MCF 10A (cell line): ENCODE measurements at regions of chr1 and their contacts with region 1.

Region 1: DNA sequence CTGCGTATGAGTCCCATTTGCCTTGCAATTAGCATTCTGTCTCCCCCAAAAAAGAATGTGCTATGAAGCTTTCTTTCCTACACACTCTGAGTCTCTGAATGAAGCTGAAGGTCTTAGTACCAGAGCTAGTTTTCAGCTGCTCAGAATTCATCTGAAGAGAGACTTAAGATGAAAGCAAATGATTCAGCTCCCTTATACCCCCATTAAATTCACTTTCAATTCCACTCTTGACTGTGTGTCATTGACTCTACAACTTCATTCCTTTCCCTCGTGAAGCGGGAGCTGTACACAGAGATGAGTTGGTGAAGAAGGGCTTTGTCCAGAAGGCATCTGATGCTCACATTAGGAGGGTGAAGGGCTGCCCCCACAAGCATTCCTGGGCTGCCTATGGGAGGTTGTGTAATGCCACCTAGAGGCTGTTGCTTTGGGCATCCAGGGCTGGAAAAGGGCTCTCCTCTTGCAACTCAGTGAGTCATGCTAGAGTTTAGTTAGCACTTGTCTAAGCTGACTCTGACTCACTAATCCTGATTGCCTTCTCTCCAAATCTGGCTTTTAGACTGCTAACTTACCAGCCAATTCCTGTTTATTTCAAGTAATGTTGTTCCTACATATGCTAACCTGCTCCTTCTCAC is 1.8 kb downstream of the SPRR1B start:
- DNase-seq: peak; percentile 97
- H3K4me3 Mint-ChIP-seq: no peak overlapping the region
- H3K27ac Mint-ChIP-seq: peak overlapping the region; percentile 25
- H3K4me1 Mint-ChIP-seq: peaks cover 12% of the 10 kb centered on the region
- H3K27me3 Mint-ChIP-seq: no peaks in the 10 kb centered on the region
- CTCF ChIP-seq: peak; percentile 68

Region 2: DNA sequence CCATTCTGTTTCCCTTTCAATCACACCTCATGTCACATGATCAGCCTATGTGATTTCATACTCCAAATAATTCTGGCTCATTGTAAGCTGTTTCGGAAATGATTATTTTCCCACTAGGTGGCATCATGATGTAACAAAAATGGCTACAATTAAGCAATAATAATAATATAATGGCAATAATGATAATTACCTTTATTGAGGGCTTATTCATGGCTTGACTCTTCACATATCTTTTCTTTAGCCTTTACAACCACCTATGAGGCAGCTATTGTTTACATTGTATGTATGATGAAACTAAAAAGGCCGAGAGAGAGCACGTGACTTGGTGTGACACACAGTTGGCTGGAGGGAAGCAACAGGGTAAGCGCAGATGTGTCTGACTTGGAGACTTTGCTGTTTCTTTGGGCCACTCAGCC is 287.5 kb before region 1 on chr1:
- CTCF ChIA-PET with region 1: no interaction called
- POLR2A ChIA-PET with region 1: no interaction called
- intact Hi-C with region 1: loop called (anchors 10 kb)
- DNase-seq: peak; percentile 89
- H3K4me3 Mint-ChIP-seq: no peak overlapping the region
- H3K27ac Mint-ChIP-seq: peak overlapping the region; percentile 71
- H3K4me1 Mint-ChIP-seq: peaks cover 34% of the 10 kb centered on the region
- H3K27me3 Mint-ChIP-seq: no peaks in the 10 kb centered on the region
- CTCF ChIP-seq: no peak

Region 3: GRCh38 chr1:152917794-152918193 is 115.0 kb before region 1 on chr1:
- CTCF ChIA-PET with region 1: interaction called, 12 read pairs
- POLR2A ChIA-PET with region 1: no interaction called
- intact Hi-C with region 1: no loop called
- DNase-seq: peak; percentile 37
- H3K4me3 Mint-ChIP-seq: no peak overlapping the region
- H3K27ac Mint-ChIP-seq: no peak overlapping the region
- H3K4me1 Mint-ChIP-seq: peaks cover 8% of the 10 kb centered on the region
- H3K27me3 Mint-ChIP-seq: no peaks in the 10 kb centered on the region
- CTCF ChIP-seq: peak; percentile 40

Region 4: DNA sequence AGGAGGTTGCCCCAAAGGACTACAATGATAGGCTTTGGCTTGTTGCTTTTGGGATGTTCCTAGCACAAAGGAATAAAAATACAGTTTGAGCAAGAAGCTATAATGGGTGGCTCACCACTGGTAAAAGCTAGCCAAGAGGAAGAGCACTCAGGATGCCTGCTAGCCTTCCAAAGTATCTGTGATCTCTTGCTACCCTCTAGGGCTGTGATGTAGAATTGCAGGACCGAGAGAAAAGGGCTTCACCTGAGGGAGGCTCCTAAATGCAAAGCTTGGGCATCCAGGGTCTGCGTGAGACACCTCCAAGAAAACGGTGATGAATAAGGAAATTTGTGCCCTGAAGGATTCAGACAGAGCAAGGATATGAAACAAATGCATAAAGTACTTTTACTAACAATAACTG is 106.7 kb before region 1 on chr1:
- CTCF ChIA-PET with region 1: interaction called, 16 read pairs
- POLR2A ChIA-PET with region 1: interaction called, 8 read pairs
- intact Hi-C with region 1: loop called (anchors 1 kb)
- DNase-seq: peak; percentile 82
- H3K4me3 Mint-ChIP-seq: no peak overlapping the region
- H3K27ac Mint-ChIP-seq: no peak overlapping the region
- H3K4me1 Mint-ChIP-seq: peaks cover 11% of the 10 kb centered on the region
- H3K27me3 Mint-ChIP-seq: no peaks in the 10 kb centered on the region
- CTCF ChIP-seq: peak; percentile 98

Region 5: GRCh38 chr1:152932170-152932811 is 100.5 kb before region 1 on chr1:
- CTCF ChIA-PET with region 1: interaction called, 16 read pairs
- POLR2A ChIA-PET with region 1: interaction called, 8 read pairs
- intact Hi-C with region 1: no loop called
- DNase-seq: peak; percentile 89
- H3K4me3 Mint-ChIP-seq: no peak overlapping the region
- H3K27ac Mint-ChIP-seq: peak overlapping the region; percentile 14
- H3K4me1 Mint-ChIP-seq: peaks cover 25% of the 10 kb centered on the region
- H3K27me3 Mint-ChIP-seq: no peaks in the 10 kb centered on the region
- CTCF ChIP-seq: no peak

Region 6: DNA sequence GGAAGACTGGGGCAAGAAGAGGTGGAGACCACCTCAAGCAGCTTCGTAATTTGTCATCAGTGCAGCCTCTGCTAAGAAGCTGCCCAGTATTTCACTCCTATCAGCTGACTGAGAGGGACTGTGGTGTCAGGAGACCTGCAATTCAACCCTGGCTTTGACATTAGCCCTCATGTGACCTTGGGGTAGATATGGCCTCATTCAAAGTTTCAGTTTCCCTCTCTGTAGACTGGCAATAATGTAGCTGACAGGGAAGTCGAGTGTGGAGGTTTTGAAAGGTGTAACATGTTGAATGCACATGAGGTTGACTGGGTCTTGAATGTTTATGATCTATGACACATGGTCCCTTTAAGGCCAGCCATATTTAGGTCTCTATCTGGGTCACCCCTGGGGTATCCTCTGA is 64.5 kb before region 1 on chr1:
- CTCF ChIA-PET with region 1: interaction called, 12 read pairs
- POLR2A ChIA-PET with region 1: interaction called, 4 read pairs
- intact Hi-C with region 1: no loop called
- DNase-seq: no peak
- H3K4me3 Mint-ChIP-seq: no peak overlapping the region
- H3K27ac Mint-ChIP-seq: no peak overlapping the region
- H3K4me1 Mint-ChIP-seq: peaks cover 21% of the 10 kb centered on the region
- H3K27me3 Mint-ChIP-seq: no peaks in the 10 kb centered on the region
- CTCF ChIP-seq: no peak

Region 7: GRCh38 chr1:153470707-153471106 is 437.9 kb after region 1 on chr1:
- CTCF ChIA-PET with region 1: no interaction called
- POLR2A ChIA-PET with region 1: no interaction called
- intact Hi-C with region 1: no loop called
- DNase-seq: no peak
- H3K4me3 Mint-ChIP-seq: no peak overlapping the region
- H3K27ac Mint-ChIP-seq: no peak overlapping the region
- H3K4me1 Mint-ChIP-seq: peaks cover 8% of the 10 kb centered on the region
- H3K27me3 Mint-ChIP-seq: no peaks in the 10 kb centered on the region
- CTCF ChIP-seq: no peak